HEK293 (cell line): ENCODE measurements at regions of chr4 and their contacts with region 1.

Region 1: GRCh38 chr4:87973283-87974169 is 2.0 kb upstream of the SPP1 start:
- H3K4me3 ChIP-seq: no peak overlapping the region
- H3K27ac ChIP-seq: no peak overlapping the region
- H3K4me1 ChIP-seq: no peaks in the 10 kb centered on the region; the same call in 1 of the 2 replicates
- CTCF ChIP-seq: peak; percentile 26; the same call in 1 of the 2 replicates

Region 2: DNA sequence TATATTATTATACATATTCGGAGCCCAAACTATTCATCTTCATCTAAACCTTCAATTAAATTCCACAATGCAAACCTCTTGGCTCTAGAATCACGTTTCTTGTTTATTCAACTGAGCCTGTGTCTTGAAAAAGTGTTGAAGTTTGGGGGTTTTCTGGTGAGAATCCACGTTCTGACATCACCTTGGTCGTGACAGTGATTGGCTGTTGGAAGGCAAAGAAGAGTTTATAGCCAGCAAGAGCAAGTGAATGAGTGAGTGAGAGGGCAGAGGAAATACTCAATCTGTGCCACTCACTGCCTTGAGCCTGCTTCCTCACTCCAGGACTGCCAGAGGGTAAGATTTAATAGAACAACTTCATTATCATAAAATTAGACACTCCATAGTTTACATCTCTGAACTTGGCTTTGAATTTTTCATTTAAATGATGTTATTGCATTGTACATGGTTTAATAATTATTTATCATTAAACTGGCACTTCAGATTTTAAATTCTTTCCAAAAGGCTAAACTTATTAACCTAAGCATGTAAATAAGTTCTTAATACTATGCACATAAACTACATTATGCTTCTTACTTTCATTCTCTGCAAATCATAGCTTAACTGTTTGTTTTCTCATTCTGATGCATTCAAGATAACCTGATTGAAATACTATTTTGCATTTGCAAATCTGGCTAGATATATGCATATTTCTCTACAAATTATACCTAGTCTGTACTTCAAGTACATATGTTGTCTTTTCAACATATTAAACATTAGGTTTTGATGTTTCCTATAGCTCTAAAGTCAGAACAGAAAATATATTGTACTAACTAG is 174.0 kb before region 1 on chr4 and contains the start of gene IBSP:
- CTCF ChIA-PET with region 1: no interaction called
- POLR2A ChIA-PET with region 1: no interaction called
- H3K4me3 ChIP-seq: no peak within 1 kb of the TSS
- H3K27ac ChIP-seq: no peak within 1 kb of the TSS
- H3K4me1 ChIP-seq: no peaks in the 10 kb centered on the region
- CTCF ChIP-seq: no peak

Region 3: GRCh38 chr4:87856816-87857215 is 116.7 kb before region 1 on chr4:
- CTCF ChIA-PET with region 1: interaction called, 32 read pairs
- POLR2A ChIA-PET with region 1: no interaction called
- H3K4me3 ChIP-seq: no peak overlapping the region
- H3K27ac ChIP-seq: no peak overlapping the region
- H3K4me1 ChIP-seq: no peaks in the 10 kb centered on the region
- CTCF ChIP-seq: no peak

Region 4: GRCh38 chr4:87957061-87957460 is 16.5 kb before region 1 on chr4:
- CTCF ChIA-PET with region 1: interaction called, 15 read pairs
- POLR2A ChIA-PET with region 1: no interaction called
- H3K4me3 ChIP-seq: no peak overlapping the region
- H3K27ac ChIP-seq: no peak overlapping the region
- H3K4me1 ChIP-seq: no peaks in the 10 kb centered on the region
- CTCF ChIP-seq: no peak

Region 5: GRCh38 chr4:87985097-87985886 is 11.8 kb after region 1 on chr4:
- CTCF ChIA-PET with region 1: interaction called, 10 read pairs
- POLR2A ChIA-PET with region 1: no interaction called
- H3K4me3 ChIP-seq: no peak overlapping the region
- H3K27ac ChIP-seq: no peak overlapping the region
- H3K4me1 ChIP-seq: no peaks in the 10 kb centered on the region
- CTCF ChIP-seq: peak; percentile 74

Region 6: DNA sequence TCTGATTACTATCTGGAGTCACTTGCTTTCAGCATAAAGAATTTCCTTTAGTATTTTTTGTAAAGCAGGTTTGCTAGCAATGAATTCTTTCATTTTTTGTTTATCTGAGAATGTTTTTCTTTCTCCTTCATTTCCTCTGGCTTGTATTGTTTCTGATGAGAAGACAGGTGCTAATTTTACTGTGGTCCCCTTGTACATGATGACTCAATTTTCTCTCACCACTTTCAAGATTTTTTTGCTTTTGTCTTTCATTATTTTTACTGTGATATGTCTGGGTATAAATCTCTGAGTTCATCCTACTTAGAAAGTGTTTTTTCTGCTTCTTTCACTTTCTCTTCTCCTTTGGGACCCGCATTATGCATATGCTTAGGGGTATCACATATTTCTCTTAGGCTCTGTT is 96.5 kb after region 1 on chr4:
- CTCF ChIA-PET with region 1: no interaction called
- POLR2A ChIA-PET with region 1: no interaction called
- H3K4me3 ChIP-seq: no peak overlapping the region
- H3K27ac ChIP-seq: no peak overlapping the region
- H3K4me1 ChIP-seq: no peaks in the 10 kb centered on the region
- CTCF ChIP-seq: no peak

Region 7: GRCh38 chr4:88230969-88231771 is 257.6 kb after region 1 on chr4:
- CTCF ChIA-PET with region 1: no interaction called
- POLR2A ChIA-PET with region 1: no interaction called
- H3K4me3 ChIP-seq: no peak overlapping the region
- H3K27ac ChIP-seq: no peak overlapping the region
- H3K4me1 ChIP-seq: no peaks in the 10 kb centered on the region
- CTCF ChIP-seq: no peak